Heart right ventricle (tissue), 16 donors: ENCODE measurements at regions of chr17 and their contacts with region 1.

Region 1: GRCh38 chr17:57604771-57605674 is 140.1 kb downstream of the CCDC182 start:
- DNase-seq: peak; percentile 50 to 73
- ATAC-seq: peak; percentile 73 to 88 (median 82)
- H3K4me3 ChIP-seq: peak overlapping the region in 5 of 10 donors; percentile 1 to 27 (median 25)
- H3K27ac ChIP-seq: peak overlapping the region; percentile 70 to 95 (median 87)
- H3K4me1 ChIP-seq: peaks cover 15 to 65% (median 50%) of the 10 kb centered on the region in 9 donors
- H3K27me3 ChIP-seq: no peaks in the 10 kb centered on the region
- CTCF ChIP-seq: peak in 1 of 9 donors; percentile 21

Region 2: GRCh38 chr17:56284482-56284881 is 1320.5 kb before region 1 on chr17:
- intact Hi-C with region 1: loop called in 1 of 10 experiments (anchors 5 kb)
- DNase-seq: no peak
- ATAC-seq: no peak
- H3K4me3 ChIP-seq: no peak overlapping the region
- H3K27ac ChIP-seq: no peak overlapping the region
- H3K4me1 ChIP-seq: no peaks in the 10 kb centered on the region
- H3K27me3 ChIP-seq: no peaks in the 10 kb centered on the region
- CTCF ChIP-seq: no peak

Region 3: GRCh38 chr17:57130761-57131461 is 474.1 kb before region 1 on chr17:
- intact Hi-C with region 1: loop called in 1 of 10 experiments (anchors 10 kb)
- DNase-seq: peak; percentile 76 to 88
- ATAC-seq: peak; percentile 91 to 96 (median 94)
- H3K4me3 ChIP-seq: peak overlapping the region in 1 of 10 donors; percentile 11
- H3K27ac ChIP-seq: no peak overlapping the region
- H3K4me1 ChIP-seq: peaks cover 0 to 5% (median 0%) of the 10 kb centered on the region in 9 donors
- H3K27me3 ChIP-seq: no peaks in the 10 kb centered on the region
- CTCF ChIP-seq: peak; percentile 80 to 95 (median 91)

Region 4: GRCh38 chr17:57649731-57650484 is 44.9 kb after region 1 on chr17:
- intact Hi-C with region 1: no loop called
- DNase-seq: no peak
- ATAC-seq: no peak
- H3K4me3 ChIP-seq: no peak overlapping the region
- H3K27ac ChIP-seq: no peak overlapping the region
- H3K4me1 ChIP-seq: no peaks in the 10 kb centered on the region
- H3K27me3 ChIP-seq: no peaks in the 10 kb centered on the region
- CTCF ChIP-seq: no peak